ENCODE measurements at regions of chrX and their contacts with region 1.

Region 1: DNA sequence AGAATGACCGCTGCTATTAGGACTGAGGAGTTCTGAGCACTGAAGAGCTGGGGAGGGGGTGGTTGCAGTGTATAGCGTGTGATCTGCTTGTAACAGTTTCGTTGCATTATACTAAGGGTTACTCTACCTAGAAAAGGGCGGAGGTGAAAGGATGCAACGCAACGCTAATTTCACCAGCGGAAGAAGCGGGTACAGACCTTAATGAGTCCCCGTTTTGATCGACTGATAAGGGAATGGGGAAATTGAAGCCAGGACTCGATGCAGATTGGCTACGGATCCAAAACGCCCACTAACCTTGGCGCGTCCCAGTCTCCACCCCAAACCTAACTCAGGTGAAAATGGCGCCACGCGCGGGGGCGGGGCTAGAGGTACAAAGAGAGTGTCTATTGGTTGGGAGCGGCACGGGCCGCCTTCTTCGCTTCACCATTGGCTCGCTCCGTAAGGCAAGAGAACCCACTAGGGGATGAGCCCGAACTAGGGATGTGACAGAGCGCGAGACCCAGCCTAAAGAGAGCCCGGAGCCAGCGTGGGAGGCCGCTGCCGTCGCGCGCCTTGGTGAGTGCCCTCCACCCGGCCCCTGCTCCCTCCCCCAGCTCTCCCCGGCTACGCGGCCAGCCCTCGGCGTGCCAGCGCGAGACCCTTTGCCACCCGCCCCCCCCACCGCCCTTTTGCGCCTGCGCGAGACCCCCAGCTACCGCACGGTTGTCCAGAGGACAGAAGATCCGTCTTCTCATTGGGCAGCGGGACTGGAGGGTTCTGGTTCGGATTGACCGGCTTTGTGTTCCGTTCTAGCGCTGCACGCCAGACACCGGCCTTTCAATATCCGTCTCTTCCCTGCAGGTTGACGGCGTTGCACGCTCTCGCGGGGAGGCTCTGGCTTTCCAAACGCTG is at the start of gene EBP:
- DNase-seq: peak; percentile 83 to 97 (median 92)
- ATAC-seq: peak; percentile 94 to 95
- H3K4me3 Mint-ChIP-seq: peak within 1 kb of the TSS; percentile 76 to 92 (median 88)
- H3K27ac Mint-ChIP-seq: peak within 1 kb of the TSS; percentile 89 to 97 (median 94)
- H3K4me1 Mint-ChIP-seq: peaks cover 13 to 39% (median 31%) of the 10 kb centered on the region in 4 donors
- H3K27me3 Mint-ChIP-seq: no peaks in the 10 kb centered on the region
- polyA plus RNA-seq, gene EBP: 77.0 to 88.8 (median 85.2) TPM

Region 2: GRCh38 chrX:48539345-48540027 is 17.9 kb after region 1 on chrX and contains the start of gene TBC1D25:
- POLR2A ChIA-PET with region 1: interaction called, 12 read pairs
- DNase-seq: peak; percentile 80 to 99 (median 96)
- ATAC-seq: peak; percentile 87 to 88
- H3K4me3 Mint-ChIP-seq: peak within 1 kb of the TSS; percentile 84 to 96 (median 87)
- H3K27ac Mint-ChIP-seq: peak within 1 kb of the TSS; percentile 66 to 99 (median 96)
- H3K4me1 Mint-ChIP-seq: peaks cover 12 to 23% (median 20%) of the 10 kb centered on the region in 4 donors
- H3K27me3 Mint-ChIP-seq: no peaks in the 10 kb centered on the region
- polyA plus RNA-seq, gene TBC1D25: 14.3 to 19.3 (median 18.0) TPM

Region 3: DNA sequence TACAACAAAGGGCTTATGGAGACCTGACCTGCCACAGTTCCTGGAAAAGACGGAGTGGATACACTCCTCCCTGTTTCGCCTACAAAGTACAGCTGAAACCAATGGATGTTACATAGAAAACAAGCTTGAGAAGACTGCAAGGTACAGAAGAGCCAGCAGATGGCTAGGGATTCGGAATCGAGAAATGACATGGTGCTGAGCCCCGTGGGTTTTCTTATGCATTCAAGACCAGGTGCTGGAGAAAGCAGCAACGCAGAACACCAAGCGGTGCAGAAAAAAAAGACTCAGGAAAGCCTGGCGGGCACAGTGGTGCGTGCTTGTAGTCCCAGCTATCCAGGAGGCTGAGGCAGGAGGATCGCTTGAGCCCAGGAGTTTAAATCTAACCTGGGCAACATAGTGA is 362.1 kb after region 1 on chrX:
- POLR2A ChIA-PET with region 1: no interaction called
- DNase-seq: no peak
- ATAC-seq: no peak
- H3K4me3 Mint-ChIP-seq: no peak overlapping the region
- H3K27ac Mint-ChIP-seq: peak overlapping the region in 2 of 10 donors; percentile 34 to 43
- H3K4me1 Mint-ChIP-seq: no peaks in the 10 kb centered on the region
- H3K27me3 Mint-ChIP-seq: no peaks in the 10 kb centered on the region

Measured in naive thymus-derived CD8-positive, alpha-beta T cell (primary cell).